Activated CD8-positive, alpha-beta memory T cell treated with anti-CD3 and anti-CD28 coated beads, Interleukin-2, amount 10 ng/mL, durations not matched to agents 7 days and 5 days (primary cell): ENCODE measurements at regions of chr17 and their contacts with region 1.

Region 1: DNA sequence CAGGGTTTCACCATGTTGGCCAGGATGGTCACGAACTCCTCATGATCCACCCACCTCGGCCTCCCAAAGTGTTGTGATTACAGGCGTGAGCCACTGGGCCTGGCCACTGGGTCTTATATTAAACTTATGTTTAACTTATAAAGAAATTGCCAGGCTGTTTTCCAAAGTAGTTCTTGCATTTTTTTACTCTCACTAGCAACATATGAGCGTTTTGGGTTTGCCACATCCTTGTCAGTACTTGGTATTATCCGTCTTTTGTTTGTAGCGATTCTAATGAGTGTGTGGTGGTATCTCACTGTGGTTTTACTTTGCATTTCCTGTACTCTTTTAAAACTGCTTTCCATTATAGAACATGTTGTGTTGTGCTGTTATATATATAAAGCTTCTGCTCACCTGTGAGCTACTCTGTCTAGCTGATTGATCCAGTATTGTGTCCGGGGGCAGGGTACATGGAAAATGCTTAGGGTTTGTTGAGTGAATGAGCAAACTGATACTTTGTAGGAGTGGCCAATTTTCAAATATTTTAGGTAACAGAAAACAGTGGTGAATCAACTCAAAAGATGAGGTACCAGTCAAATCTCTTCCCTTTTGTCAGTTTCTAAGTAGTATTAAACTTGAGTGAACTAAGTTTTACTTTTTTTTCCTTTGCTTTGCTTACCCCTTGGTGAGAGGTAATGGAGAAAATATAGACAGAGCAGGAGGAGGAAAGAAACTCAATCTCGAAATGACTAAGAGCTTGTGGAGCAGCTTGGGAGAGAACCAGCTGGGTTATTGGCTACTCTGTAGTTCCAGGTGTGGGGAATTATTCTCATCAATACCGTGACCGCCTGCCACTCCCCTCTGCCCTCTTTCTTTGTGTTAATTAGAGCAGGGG is 75.8 kb downstream of the PITPNC1 start:
- DNase-seq: peak; percentile 67
- ATAC-seq: peak; percentile 87
- H3K4me3 Mint-ChIP-seq: peak overlapping the region; percentile 67
- H3K27ac Mint-ChIP-seq: peak overlapping the region; percentile 93
- H3K4me1 Mint-ChIP-seq: peaks cover 65% of the 10 kb centered on the region
- H3K27me3 Mint-ChIP-seq: no peaks in the 10 kb centered on the region

Region 2: GRCh38 chr17:67171560-67171959 is 281.4 kb before region 1 on chr17:
- CTCF ChIA-PET with region 1: no interaction called
- DNase-seq: no peak
- ATAC-seq: no peak
- H3K4me3 Mint-ChIP-seq: no peak overlapping the region
- H3K27ac Mint-ChIP-seq: no peak overlapping the region
- H3K4me1 Mint-ChIP-seq: peaks cover 6% of the 10 kb centered on the region
- H3K27me3 Mint-ChIP-seq: no peaks in the 10 kb centered on the region

Region 3: GRCh38 chr17:67441052-67441927 is 11.6 kb before region 1 on chr17:
- CTCF ChIA-PET with region 1: interaction called, 35 read pairs
- DNase-seq: peak; percentile 89
- ATAC-seq: peak; percentile 92
- H3K4me3 Mint-ChIP-seq: peak overlapping the region; percentile 73
- H3K27ac Mint-ChIP-seq: peak overlapping the region; percentile 99
- H3K4me1 Mint-ChIP-seq: peaks cover 55% of the 10 kb centered on the region
- H3K27me3 Mint-ChIP-seq: no peaks in the 10 kb centered on the region